ENCODE measurements at regions of chr12 and their contacts with region 1.

Region 1: GRCh38 chr12:6937481-6938297 is 5.9 kb upstream of the RNU7-1 start:
- DNase-seq: peak; percentile 80 to 98 (median 92)
- ATAC-seq: peak; percentile 93 to 95 (median 94)
- H3K4me3 ChIP-seq: peak overlapping the region; percentile 62 to 72
- H3K4me3 Mint-ChIP-seq: peak overlapping the region; percentile 76 to 84 (median 83)
- H3K27ac ChIP-seq: peak overlapping the region; percentile 94
- H3K27ac Mint-ChIP-seq: peak overlapping the region; percentile 91 to 93
- H3K4me1 ChIP-seq: peaks cover 17 to 48% of the 10 kb centered on the region in 2 experiments
- H3K4me1 Mint-ChIP-seq: peaks cover 40 to 60% (median 46%) of the 10 kb centered on the region in 3 donors
- H3K27me3 ChIP-seq: no peaks in the 10 kb centered on the region
- H3K27me3 Mint-ChIP-seq: no peaks in the 10 kb centered on the region

Region 2: DNA sequence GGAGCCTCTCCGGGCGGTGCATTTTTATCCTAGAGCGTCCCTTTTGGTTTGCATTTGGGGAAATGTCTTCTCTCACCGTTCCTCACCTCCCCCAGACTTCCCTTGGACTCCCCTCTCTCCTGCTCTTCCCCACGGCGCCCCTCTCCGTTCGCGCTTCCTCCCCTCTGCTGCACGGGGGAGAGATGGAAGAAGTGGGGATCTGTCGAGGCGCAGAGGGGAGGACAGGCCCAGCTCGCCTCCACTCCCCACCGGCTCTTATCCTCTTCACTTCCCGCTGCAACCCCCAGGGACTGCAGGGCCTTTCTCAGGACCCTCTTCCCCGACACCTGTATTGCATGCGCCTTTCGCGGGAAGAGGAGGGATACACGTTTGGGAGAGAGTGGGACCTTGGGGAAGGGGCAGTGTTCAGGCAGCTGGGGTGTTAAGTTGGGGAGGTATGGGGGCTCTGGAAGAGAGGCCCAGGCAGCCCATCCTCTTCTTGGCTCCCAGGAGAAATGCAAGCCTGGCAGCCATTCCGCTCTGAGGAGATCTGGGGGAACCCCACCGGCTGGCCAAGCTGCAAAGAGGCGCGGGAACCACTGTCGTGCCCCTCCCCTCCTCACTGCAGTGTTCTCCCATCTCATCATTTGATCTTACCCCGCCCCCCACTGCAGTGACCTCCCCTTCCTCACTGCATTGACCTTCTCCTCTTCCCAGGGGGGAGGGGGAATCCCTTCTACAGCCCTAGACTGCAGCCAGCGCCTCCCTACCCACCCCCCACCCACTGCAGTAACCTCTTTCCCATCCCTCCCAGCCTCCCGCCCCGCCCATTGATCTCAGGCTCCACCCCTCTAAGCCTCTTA is 22.5 kb before region 1 on chr12:
- CTCF ChIA-PET with region 1: interaction called in 1 of 2 experiments, 10 read pairs
- POLR2A ChIA-PET with region 1: no interaction called
- DNase-seq: no peak
- ATAC-seq: no peak
- H3K4me3 ChIP-seq: peak overlapping the region; percentile 54 to 65
- H3K4me3 Mint-ChIP-seq: peak overlapping the region; percentile 89 to 98 (median 92)
- H3K27ac ChIP-seq: peak overlapping the region; percentile 61
- H3K27ac Mint-ChIP-seq: peak overlapping the region; percentile 91 to 95
- H3K4me1 ChIP-seq: peaks cover 4 to 28% of the 10 kb centered on the region in 2 experiments
- H3K4me1 Mint-ChIP-seq: peaks cover 32 to 44% (median 40%) of the 10 kb centered on the region in 3 donors
- H3K27me3 ChIP-seq: no peaks in the 10 kb centered on the region
- H3K27me3 Mint-ChIP-seq: no peaks in the 10 kb centered on the region

Region 3: GRCh38 chr12:7304456-7304855 is 366.8 kb after region 1 on chr12:
- CTCF ChIA-PET with region 1: no interaction called
- POLR2A ChIA-PET with region 1: no interaction called
- DNase-seq: no peak
- ATAC-seq: no peak
- H3K4me3 ChIP-seq: no peak overlapping the region
- H3K4me3 Mint-ChIP-seq: no peak overlapping the region
- H3K27ac ChIP-seq: no peak overlapping the region
- H3K27ac Mint-ChIP-seq: no peak overlapping the region
- H3K4me1 ChIP-seq: no peaks in the 10 kb centered on the region
- H3K4me1 Mint-ChIP-seq: no peaks in the 10 kb centered on the region
- H3K27me3 ChIP-seq: peaks cover 0 to 6% of the 10 kb centered on the region in 2 experiments
- H3K27me3 Mint-ChIP-seq: peaks cover 16 to 21% of the 10 kb centered on the region in 2 donors